CD8-positive, alpha-beta memory T cell (primary cell): ENCODE measurements at regions of chr3 and their contacts with region 1.

Region 1: DNA sequence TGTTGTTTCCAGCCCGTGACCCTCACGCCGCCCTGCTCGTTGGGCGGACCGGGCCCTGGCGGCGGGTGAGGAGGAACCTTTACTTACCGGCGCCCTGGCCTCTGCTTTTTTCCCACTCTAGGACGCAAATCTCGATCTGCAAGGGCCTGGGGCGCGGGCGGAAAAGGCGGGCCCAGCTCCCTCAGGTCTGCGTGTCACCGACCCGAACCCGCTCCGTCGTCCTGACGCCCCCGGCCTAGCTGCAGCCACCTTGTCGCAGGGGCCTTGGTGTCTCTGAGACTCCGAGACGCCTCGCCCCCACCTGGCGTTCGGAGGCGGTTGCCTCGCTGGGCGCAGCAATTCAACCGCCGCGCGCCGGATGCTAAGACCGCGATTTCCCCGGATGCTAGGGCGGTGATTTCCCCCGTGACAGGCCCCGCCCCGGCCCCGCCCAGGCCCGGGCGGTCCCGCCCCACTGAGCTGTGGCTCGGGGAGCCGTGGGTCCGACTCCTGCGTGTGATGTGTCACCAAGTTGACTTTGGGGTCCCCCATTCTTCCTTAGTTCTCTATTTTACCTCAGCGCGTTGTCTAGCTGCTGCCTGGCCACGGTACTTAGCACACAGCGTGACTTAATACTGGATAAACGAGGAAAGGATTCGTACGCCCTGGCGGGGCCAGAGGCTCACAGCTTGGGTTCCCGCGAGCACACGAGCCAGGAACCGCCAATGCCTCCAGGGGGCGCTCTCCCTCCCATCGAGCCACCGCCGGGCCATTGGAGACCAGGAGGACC is at the start of gene RPL39L:
- DNase-seq: peak; percentile 89 to 94 (median 90)
- H3K4me3 ChIP-seq: peak within 1 kb of the TSS; percentile 83
- H3K4me3 Mint-ChIP-seq: peak within 1 kb of the TSS; percentile 83 to 97 (median 90)
- H3K27ac ChIP-seq: peak within 1 kb of the TSS; percentile 78
- H3K27ac Mint-ChIP-seq: peak within 1 kb of the TSS; percentile 86 to 96 (median 93)
- H3K4me1 ChIP-seq: peaks cover 14% of the 10 kb centered on the region
- H3K4me1 Mint-ChIP-seq: peaks cover 15 to 27% (median 19%) of the 10 kb centered on the region in 3 donors
- H3K27me3 ChIP-seq: no peaks in the 10 kb centered on the region
- H3K27me3 Mint-ChIP-seq: no peaks in the 10 kb centered on the region
- total RNA-seq, gene RPL39L: 11.3 to 13.1 TPM

Region 2: GRCh38 chr3:187025656-187026316 is 113.5 kb before region 1 on chr3:
- CTCF ChIA-PET with region 1: interaction called, 15 read pairs
- POLR2A ChIA-PET with region 1: interaction called, 3 read pairs
- DNase-seq: peak in 1 of 5 donors; percentile 46
- H3K4me3 ChIP-seq: peak overlapping the region; percentile 64
- H3K4me3 Mint-ChIP-seq: peak overlapping the region; percentile 79 to 92 (median 84)
- H3K27ac ChIP-seq: peak overlapping the region; percentile 49
- H3K27ac Mint-ChIP-seq: peak overlapping the region; percentile 82 to 97 (median 89)
- H3K4me1 ChIP-seq: peaks cover 74% of the 10 kb centered on the region
- H3K4me1 Mint-ChIP-seq: peaks cover 68 to 81% (median 78%) of the 10 kb centered on the region in 3 donors
- H3K27me3 ChIP-seq: no peaks in the 10 kb centered on the region
- H3K27me3 Mint-ChIP-seq: no peaks in the 10 kb centered on the region

Region 3: GRCh38 chr3:187112934-187113793 is 26.1 kb before region 1 on chr3:
- CTCF ChIA-PET with region 1: interaction called, 53 read pairs
- POLR2A ChIA-PET with region 1: interaction called, 4 read pairs
- DNase-seq: peak in 2 of 5 donors; percentile 24 to 47
- H3K4me3 ChIP-seq: no peak overlapping the region
- H3K4me3 Mint-ChIP-seq: no peak overlapping the region
- H3K27ac ChIP-seq: no peak overlapping the region
- H3K27ac Mint-ChIP-seq: no peak overlapping the region
- H3K4me1 ChIP-seq: no peaks in the 10 kb centered on the region
- H3K4me1 Mint-ChIP-seq: peaks cover 3 to 8% (median 7%) of the 10 kb centered on the region in 3 donors
- H3K27me3 ChIP-seq: no peaks in the 10 kb centered on the region
- H3K27me3 Mint-ChIP-seq: peaks cover 0 to 4% of the 10 kb centered on the region in 2 donors

Region 4: GRCh38 chr3:187125319-187126031 is 13.8 kb before region 1 on chr3:
- CTCF ChIA-PET with region 1: interaction called, 30 read pairs
- POLR2A ChIA-PET with region 1: interaction called, 5 read pairs
- DNase-seq: no peak
- H3K4me3 ChIP-seq: no peak overlapping the region
- H3K4me3 Mint-ChIP-seq: peak overlapping the region in 1 of 7 donors; percentile 65
- H3K27ac ChIP-seq: no peak overlapping the region
- H3K27ac Mint-ChIP-seq: no peak overlapping the region
- H3K4me1 ChIP-seq: peaks cover 13% of the 10 kb centered on the region
- H3K4me1 Mint-ChIP-seq: peaks cover 12 to 21% (median 12%) of the 10 kb centered on the region in 3 donors
- H3K27me3 ChIP-seq: no peaks in the 10 kb centered on the region
- H3K27me3 Mint-ChIP-seq: no peaks in the 10 kb centered on the region

Region 5: DNA sequence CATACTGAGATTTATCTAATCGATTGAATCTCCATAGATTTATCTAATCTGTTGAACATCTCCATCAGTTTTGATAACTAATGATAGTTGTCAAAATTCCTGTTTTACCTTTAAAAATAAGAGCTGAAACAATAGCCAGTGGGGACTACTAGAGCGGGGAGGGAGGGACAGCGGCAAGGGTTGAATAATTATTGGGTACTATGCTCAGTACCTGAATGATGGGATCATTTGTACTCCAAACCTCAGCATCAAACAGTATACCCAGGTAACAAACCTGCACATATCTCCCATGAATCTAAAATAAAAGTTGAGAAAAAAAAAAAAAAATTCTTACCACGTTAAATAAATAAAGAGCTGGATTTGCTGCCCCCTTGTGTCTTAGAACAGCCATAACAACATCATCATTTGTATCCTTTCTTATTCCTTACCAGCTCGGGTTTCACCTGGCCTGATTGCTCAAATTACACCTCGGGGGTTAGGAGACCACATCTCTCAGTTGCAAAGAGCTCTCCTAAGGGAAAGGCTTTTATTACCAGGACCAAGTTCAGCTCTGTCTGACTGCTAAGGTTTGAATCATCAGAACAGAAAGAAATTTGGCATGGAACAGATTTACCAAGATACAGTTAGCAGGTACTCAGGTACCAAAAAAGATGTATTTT is 25.7 kb after region 1 on chr3:
- CTCF ChIA-PET with region 1: interaction called, 40 read pairs
- POLR2A ChIA-PET with region 1: interaction called, 6 read pairs
- DNase-seq: peak in 4 of 5 donors; percentile 18 to 66 (median 52)
- H3K4me3 ChIP-seq: no peak overlapping the region
- H3K4me3 Mint-ChIP-seq: no peak overlapping the region
- H3K27ac ChIP-seq: no peak overlapping the region
- H3K27ac Mint-ChIP-seq: peak overlapping the region in 1 of 8 donors; percentile 77
- H3K4me1 ChIP-seq: peaks cover 3% of the 10 kb centered on the region
- H3K4me1 Mint-ChIP-seq: peaks cover 2 to 3% (median 3%) of the 10 kb centered on the region in 3 donors
- H3K27me3 ChIP-seq: no peaks in the 10 kb centered on the region
- H3K27me3 Mint-ChIP-seq: peaks cover 8 to 13% of the 10 kb centered on the region in 2 donors

Region 6: DNA sequence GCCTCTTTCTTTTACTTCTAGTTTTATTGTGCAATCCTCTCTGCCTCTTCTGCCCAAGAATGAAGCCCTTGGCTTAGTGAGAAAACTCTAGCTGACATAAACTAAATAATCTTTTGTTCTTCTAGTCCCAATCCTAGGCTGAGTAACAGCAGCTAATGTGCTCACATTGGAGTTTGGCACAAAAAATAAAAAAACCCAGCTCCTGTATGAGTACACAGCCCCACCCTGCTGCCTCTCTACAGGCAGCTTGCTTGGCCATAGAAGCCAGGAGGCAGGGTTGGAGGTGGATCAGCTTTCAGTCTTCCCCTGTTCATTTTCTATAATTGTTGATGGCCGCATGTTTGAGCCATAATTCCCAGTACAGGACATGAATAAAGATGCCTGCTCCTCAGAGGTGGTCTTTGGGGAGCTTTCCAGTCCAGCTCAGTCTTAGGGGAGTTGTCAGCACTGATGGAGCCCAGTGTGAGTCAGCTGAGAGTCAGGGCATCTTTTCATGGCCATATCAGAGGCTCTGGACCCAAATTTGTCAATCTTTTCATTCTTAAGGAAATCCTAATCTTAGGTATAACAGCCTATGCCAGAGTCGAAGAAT is 104.7 kb after region 1 on chr3:
- CTCF ChIA-PET with region 1: no interaction called
- POLR2A ChIA-PET with region 1: no interaction called
- DNase-seq: no peak
- H3K4me3 ChIP-seq: no peak overlapping the region
- H3K4me3 Mint-ChIP-seq: no peak overlapping the region
- H3K27ac ChIP-seq: no peak overlapping the region
- H3K27ac Mint-ChIP-seq: no peak overlapping the region
- H3K4me1 ChIP-seq: peaks cover 6% of the 10 kb centered on the region
- H3K4me1 Mint-ChIP-seq: peaks cover 3 to 18% (median 9%) of the 10 kb centered on the region in 3 donors
- H3K27me3 ChIP-seq: no peaks in the 10 kb centered on the region
- H3K27me3 Mint-ChIP-seq: peaks cover 6 to 17% of the 10 kb centered on the region in 2 donors